ENCODE measurements at regions of chr21 and their contacts with region 1.

Region 1: DNA sequence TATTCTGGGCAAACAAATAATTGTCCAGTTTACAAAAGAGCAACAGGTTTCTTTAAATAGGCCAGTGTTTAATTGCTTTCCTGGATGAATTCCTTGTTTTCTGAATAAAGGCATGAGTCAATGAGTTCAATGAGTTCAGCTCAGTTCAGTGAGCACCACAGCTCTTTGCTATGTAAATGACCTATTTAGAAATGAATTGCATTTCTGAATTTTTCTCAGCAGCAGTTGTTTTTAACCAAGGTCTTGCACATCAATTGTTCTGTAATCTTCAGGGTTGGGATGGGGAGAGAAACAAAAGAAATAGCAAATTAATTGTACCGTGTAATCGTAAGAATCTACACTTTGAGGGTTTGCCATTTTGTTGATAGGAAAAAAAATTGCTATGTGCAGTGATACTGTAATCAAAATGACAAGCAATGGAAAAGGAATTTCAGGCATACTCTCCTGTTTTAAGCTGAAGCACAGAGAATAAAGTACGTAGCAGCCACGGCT is 45.7 kb downstream of the MIS18A start:
- DNase-seq: no peak
- ATAC-seq: no peak

Region 2: DNA sequence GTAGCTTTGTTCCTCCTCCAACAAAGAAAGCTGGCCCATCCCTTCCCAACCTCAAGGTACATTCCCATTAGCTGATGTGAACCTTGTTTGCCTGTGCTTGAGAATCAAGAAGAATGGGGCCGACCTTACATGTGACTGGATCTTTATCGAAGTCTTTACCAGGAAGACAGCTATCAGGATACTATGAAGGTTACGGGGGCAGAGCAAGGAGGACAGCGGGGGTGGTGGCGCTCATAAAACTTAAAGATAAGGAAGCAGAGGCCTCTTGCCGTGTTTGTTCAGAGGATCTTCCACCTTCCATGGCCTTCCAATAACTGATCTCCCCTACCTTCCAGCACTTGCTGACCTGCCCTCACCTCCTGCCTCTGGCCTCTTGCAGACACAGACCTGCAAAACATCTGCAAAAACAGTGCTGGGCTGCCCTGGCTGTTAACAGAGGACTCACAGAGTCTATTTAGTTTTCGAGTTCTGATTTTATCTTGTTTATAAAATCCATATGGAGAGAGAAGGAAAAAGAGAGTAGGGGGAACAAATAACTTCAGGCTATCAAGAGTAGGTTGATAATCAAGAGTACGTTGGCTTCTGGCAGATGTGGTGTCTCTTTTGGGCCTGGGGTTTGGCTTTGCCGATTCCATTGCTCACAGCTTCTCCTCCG is 162.3 kb before region 1 on chr21:
- intact Hi-C with region 1: loop called in 1 of 2 experiments (anchors 10 kb)
- DNase-seq: no peak
- ATAC-seq: no peak